Heart right ventricle (tissue), 16 donors: ENCODE measurements at regions of chr2 and their contacts with region 1.

Region 1: DNA sequence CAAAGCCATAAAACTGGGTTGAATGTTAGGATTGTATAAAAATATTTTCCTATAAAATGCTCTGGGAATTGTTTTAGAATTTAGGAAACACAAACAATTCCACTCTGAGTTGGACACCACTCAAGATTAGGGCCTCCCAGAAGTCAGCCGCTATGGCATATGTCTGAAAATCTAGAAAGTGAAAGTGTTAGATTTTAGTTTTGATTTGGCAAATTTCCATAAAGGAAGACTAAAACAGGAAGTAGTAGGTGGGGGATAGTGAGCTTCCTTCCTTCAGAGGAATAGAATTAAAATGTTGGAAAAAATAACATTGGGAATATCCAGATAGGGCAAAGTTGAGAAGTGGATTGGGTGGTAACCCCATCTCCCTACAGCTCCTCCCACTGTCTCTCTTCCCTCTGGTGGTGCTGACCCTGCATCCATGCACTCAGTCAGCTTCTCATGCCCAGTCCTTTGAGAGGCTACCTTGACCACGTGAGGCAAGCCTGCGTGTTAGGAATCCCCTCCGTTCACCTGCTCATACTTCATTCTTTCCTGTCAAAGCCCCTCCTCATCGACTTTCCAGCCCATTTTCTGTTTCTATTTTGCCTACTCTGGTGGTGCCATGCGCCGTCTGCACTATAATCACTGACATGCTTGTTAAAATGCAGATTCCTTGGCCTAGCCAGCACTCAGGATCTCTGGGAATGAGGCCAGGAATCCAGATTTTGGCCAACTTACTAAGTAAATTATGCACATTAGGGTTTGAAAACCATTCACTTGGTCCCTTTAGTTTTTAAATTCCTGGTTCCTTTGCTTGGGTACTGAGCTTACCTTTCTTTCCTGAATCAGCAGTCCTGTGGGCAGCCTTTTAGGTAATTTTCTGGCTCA is 83.5 kb downstream of the POLE4 start:
- DNase-seq: no peak
- ATAC-seq: peak in 5 of 8 donors; percentile 60 to 81 (median 71)
- H3K4me3 ChIP-seq: peak overlapping the region in 1 of 10 donors; percentile 0
- H3K27ac ChIP-seq: peak overlapping the region in 8 of 10 donors; percentile 3 to 66 (median 46)
- H3K4me1 ChIP-seq: peaks cover 0 to 28% (median 20%) of the 10 kb centered on the region in 9 donors
- H3K27me3 ChIP-seq: no peaks in the 10 kb centered on the region
- CTCF ChIP-seq: no peak

Region 2: GRCh38 chr2:74290466-74291217 is 751.3 kb before region 1 on chr2:
- intact Hi-C with region 1: no loop called
- DNase-seq: no peak
- ATAC-seq: peak in 5 of 8 donors; percentile 26 to 49 (median 35)
- H3K4me3 ChIP-seq: no peak overlapping the region
- H3K27ac ChIP-seq: peak overlapping the region in 1 of 10 donors; percentile 61
- H3K4me1 ChIP-seq: peaks cover 0 to 17% (median 6%) of the 10 kb centered on the region in 9 donors
- H3K27me3 ChIP-seq: no peaks in the 10 kb centered on the region
- CTCF ChIP-seq: no peak

Region 3: DNA sequence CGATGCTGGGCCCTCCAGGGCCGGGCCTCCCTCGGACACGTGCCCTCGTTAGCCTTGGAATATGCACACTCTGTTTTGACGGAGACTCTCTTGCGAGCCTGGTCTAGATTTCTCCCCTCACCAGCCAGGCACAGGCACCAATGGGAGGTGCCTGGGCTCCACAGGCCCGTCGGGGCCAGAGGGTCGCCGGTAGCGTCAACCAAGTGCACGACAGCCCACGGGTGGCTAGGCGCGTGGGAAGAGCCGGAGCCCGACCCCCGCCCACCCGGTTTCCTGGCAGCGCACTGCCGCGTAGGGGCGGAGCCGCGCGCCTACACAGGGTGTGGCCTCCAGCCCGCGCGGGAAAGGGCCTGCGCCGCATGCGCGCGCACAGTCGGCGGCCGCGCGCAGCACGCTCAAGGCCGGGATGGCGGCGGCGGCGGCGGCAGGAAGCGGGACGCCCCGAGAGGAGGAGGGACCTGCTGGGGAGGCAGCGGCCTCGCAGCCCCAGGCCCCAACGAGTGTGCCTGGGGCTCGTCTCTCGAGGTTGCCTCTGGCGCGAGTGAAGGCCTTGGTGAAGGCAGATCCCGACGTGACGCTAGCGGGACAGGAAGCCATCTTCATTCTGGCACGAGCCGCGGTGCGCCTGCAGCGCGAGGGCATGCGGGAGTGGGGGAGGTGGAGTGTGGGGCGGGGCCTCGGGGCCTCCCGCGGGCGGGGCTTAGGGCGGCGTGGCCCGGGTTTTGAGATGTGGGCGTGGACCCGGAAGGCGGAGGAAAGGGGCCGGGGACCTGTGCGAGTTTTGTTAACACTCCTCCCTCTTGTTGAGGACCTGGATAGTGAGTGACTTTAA is 83.5 kb before region 1 on chr2 and contains the start of gene POLE4:
- intact Hi-C with region 1: loop called in 1 of 10 experiments (anchors 5 kb)
- DNase-seq: peak; percentile 92 to 96
- ATAC-seq: peak; percentile 97 to 100 (median 98)
- H3K4me3 ChIP-seq: peak within 1 kb of the TSS; percentile 2 to 79 (median 66)
- H3K27ac ChIP-seq: peak within 1 kb of the TSS; percentile 41 to 94 (median 90)
- H3K4me1 ChIP-seq: peaks cover 0 to 21% (median 10%) of the 10 kb centered on the region in 9 donors
- H3K27me3 ChIP-seq: no peaks in the 10 kb centered on the region
- CTCF ChIP-seq: peak in 2 of 9 donors; percentile 16 to 24
- total RNA-seq, gene POLE4: 24.8 to 56.5 (median 34.4) TPM